ENCODE measurements at regions of chr3 and their contacts with region 1.

Region 1: DNA sequence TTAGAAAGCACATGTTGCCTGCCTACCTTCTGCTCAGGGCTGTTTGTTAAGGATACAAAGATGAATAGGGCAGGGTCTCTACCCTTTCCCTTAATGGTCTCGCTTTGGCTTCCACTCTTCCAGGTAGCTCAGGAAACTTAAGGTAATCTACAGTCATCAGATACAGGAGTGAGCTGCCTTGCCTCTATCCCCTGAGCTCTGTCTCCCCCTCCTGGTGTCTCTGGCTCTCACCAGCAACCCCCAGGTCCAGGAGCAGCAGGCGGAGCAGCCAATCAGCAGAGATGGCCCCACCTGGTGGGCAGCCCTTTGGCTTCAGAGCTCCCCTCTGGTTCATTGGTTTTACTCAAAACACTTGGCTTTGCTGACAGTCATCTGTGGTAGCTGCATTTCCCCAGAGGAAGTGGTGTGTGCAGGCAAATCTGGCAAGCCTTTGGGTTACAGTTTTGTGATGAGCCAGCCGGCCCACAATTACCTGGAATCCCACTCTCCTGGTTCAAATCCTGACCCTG is 8.5 kb upstream of the CX3CR1 start:
- DNase-seq: peak; percentile 90
- H3K4me3 Mint-ChIP-seq: no peak overlapping the region
- H3K27ac Mint-ChIP-seq: peak overlapping the region; percentile 22
- H3K4me1 Mint-ChIP-seq: peaks cover 61% of the 10 kb centered on the region
- H3K27me3 Mint-ChIP-seq: no peaks in the 10 kb centered on the region

Region 2: GRCh38 chr3:39107388-39108199 is 180.8 kb before region 1 on chr3 and contains the starts of genes GORASP1 and TTC21A:
- CTCF ChIA-PET with region 1: interaction called, 35 read pairs
- POLR2A ChIA-PET with region 1: interaction called, 5 read pairs
- DNase-seq: peak; percentile 81
- H3K4me3 Mint-ChIP-seq: peak within 1 kb of the TSS; percentile 84
- H3K27ac Mint-ChIP-seq: peak within 1 kb of the TSS; percentile 91
- H3K4me1 Mint-ChIP-seq: peaks cover 50% of the 10 kb centered on the region
- H3K27me3 Mint-ChIP-seq: no peaks in the 10 kb centered on the region
- total RNA-seq, gene GORASP1: 52.0 to 53.1 TPM
- total RNA-seq, gene TTC21A: 11.2 to 12.1 TPM

Region 3: DNA sequence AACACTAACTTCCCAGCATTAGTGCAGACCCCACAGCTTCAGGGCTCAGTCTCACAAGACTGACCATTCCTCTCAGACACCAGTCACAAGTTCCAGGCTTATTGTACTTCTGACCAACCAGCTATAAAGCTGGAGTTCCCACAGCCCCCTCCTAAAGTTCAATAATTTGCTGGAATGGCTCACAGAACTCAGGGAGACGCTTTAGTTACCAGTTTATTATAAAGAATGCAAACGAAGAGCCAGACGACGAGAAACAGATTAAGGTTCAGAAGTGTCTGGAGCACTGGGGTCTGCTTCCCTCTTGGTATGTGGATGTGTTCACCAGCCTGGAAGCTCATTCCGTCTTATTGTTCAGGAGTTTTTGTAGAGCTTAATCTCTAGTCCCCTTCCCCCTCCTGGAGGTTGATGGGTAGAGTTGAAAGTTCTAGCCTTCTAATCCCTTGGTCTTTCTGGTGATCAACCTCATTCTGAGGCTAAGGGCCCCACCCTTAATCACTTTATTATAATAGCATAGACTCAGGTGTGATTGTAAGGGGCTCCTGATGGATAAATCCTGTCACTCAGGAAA is 130.1 kb before region 1 on chr3:
- CTCF ChIA-PET with region 1: interaction called, 16 read pairs
- POLR2A ChIA-PET with region 1: no interaction called
- DNase-seq: no peak
- H3K4me3 Mint-ChIP-seq: no peak overlapping the region
- H3K27ac Mint-ChIP-seq: no peak overlapping the region
- H3K4me1 Mint-ChIP-seq: peaks cover 11% of the 10 kb centered on the region
- H3K27me3 Mint-ChIP-seq: peaks cover 23% of the 10 kb centered on the region

Region 4: DNA sequence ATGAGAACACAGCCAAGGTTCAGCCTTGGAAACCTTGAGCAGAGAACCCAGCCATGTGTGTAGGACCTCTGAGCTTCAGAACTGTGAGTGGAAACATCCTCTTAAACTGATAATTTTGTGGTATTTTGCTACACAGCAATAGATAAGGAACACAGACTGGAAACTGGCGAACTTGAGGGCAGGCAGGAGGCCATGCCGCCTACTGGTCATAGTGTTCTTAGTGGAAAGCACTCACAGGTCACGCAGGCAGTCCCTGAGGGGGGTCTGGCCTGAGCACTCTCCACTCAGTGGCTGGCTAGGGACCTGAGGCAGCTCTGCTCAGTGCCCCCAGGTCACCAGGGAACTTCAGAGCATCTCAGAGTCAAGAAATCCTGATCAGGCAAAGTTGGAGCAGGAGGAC is 86.3 kb before region 1 on chr3:
- CTCF ChIA-PET with region 1: interaction called, 633 read pairs
- POLR2A ChIA-PET with region 1: no interaction called
- DNase-seq: peak; percentile 11
- H3K4me3 Mint-ChIP-seq: no peak overlapping the region
- H3K27ac Mint-ChIP-seq: no peak overlapping the region
- H3K4me1 Mint-ChIP-seq: peaks cover 2% of the 10 kb centered on the region
- H3K27me3 Mint-ChIP-seq: peaks cover 37% of the 10 kb centered on the region

Region 5: DNA sequence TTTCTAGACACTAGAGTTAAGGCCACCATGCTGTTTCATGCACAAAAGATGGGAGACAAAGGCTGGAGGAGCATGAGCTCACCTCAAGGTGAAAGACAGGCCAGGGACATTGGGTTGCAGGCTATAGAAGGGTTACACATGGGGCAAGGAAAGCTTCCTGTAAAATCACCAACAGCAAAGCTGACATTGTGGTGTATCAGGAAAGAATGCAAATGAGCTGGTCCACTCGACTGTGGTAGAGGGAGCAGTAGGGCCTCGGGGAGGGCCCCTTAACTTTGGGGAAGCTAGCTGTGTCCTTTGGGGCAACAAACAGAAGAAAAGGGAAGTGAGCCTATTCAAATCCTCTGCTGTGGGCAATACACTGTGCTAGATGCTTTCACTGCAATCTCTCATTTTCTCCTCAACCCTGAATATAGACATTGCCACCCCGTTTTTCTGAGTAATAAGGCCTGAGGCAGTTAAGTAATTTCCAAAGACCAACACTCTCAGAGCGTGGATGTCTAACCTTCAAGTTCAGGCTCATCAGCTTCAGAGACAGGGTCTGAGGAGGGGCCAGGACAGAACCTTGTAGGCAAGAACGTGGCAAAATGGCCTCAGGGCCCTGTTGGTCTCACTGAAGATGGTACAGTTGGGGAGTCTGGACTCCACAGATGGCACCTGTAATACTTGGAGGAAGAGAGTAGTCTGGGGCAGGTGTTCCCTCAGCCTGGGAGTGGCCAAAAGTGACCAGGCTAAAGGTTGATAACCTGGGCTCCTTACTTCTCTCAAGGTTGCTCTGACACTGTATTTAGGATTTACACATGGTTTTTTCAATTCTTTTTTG is 32.6 kb before region 1 on chr3:
- CTCF ChIA-PET with region 1: interaction called, 14 read pairs
- POLR2A ChIA-PET with region 1: interaction called, 3 read pairs
- DNase-seq: no peak
- H3K4me3 Mint-ChIP-seq: no peak overlapping the region
- H3K27ac Mint-ChIP-seq: no peak overlapping the region
- H3K4me1 Mint-ChIP-seq: peaks cover 48% of the 10 kb centered on the region
- H3K27me3 Mint-ChIP-seq: peaks cover 20% of the 10 kb centered on the region

Region 6: DNA sequence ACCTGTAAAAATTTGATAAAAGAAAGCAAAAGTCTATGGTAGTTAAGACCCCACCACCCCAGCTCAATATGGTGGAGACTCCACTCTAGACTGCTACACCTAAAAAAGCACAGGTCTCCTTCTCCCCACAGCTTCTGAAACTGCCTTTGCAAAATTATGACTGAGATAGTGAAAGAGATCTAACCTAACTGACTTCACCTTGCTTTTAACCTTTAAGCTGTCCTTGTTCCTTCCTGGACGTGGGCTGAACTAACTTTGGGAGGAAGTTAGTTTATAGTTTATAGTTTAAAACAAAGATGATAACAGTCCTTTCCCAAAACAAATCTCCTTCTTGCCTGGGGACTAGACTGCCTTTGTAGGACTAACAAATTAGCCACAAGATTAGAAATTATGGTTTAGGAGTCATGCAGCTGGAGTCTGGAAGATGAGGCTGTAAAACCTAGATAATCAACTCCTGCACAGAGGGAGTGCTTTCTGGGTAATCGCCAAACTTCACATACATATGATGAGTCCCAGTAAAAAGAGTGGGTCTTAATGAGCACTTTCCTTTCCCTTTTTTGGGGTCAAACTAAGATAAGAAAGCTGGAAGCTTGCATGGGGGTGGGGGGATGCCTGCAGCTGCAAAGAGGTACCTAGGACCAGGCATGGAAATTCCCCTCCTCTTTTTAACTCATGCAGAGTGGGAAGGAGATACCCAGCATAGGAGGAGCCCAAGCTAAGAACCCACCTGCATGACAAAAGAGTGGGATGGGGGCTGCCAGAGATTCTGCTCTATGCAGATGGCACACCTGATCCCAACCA is 58.6 kb after region 1 on chr3:
- CTCF ChIA-PET with region 1: interaction called, 65 read pairs
- POLR2A ChIA-PET with region 1: no interaction called
- DNase-seq: no peak
- H3K4me3 Mint-ChIP-seq: no peak overlapping the region
- H3K27ac Mint-ChIP-seq: peak overlapping the region; percentile 57
- H3K4me1 Mint-ChIP-seq: peaks cover 54% of the 10 kb centered on the region
- H3K27me3 Mint-ChIP-seq: no peaks in the 10 kb centered on the region

Measured in activated CD4-positive, alpha-beta memory T cell treated with anti-CD3 and anti-CD28 coated beads, Interleukin-2, amount 10 ng/mL, durations not matched to agents 7 days and 5 days (primary cell).